ENCODE measurements at regions of chr2 and their contacts with region 1.

Region 1: GRCh38 chr2:86396291-86396785 is 44.8 kb upstream of the KDM3A start:
- DNase-seq: peak in 1 of 2 donors; percentile 64
- H3K4me3 ChIP-seq: peak overlapping the region in 1 of 2 donors; percentile 45
- H3K27ac ChIP-seq: no peak overlapping the region
- H3K4me1 ChIP-seq: no peaks in the 10 kb centered on the region
- H3K27me3 ChIP-seq: no peaks in the 10 kb centered on the region
- CTCF ChIP-seq: peak; percentile 41 to 63 (median 55)

Region 2: DNA sequence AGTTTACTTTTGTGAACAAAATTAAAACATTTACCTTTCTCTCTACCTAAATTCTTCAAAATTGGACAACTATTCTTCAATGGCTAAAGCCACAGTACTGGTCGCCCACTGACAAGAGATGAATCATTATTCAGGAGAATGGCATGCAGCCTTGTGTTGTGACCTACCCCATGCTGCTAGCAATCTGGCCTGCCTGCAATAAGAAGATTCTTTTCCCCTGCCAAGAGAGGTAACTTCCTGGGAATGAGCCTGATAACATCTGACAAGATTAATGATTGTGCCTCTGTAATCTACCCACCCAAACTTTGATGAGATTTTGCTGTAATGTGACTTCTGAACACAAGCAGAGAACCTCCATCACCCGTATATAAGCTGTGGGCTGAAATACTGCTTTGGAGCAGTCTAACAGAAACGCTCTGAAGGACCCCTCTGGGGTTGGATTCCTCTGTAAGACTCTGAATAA is 460.6 kb before region 1 on chr2:
- intact Hi-C with region 1: no loop called
- DNase-seq: no peak
- H3K4me3 ChIP-seq: no peak overlapping the region
- H3K27ac ChIP-seq: no peak overlapping the region
- H3K4me1 ChIP-seq: no peaks in the 10 kb centered on the region
- H3K27me3 ChIP-seq: no peaks in the 10 kb centered on the region
- CTCF ChIP-seq: no peak

Region 3: DNA sequence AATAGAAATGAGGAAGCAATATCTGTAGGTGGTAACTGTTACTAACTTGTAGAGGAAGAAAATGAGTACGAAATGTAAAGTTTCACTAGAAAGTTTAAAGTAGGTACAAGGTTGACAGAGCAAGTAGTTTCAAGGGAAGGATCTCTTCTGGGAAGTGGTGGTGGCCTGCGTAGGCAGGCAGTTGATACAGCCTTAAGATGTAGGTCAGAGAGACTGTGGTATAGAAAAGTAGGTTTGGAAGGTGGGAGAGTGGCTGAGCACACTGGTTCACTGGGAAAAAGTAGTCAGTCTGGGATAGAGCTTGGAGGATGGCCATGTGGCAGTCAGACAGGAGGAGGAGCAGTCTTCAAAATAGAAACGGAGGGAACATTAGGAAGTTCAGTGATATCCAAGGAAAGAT is 68.3 kb after region 1 on chr2:
- intact Hi-C with region 1: no loop called
- DNase-seq: no peak
- H3K4me3 ChIP-seq: no peak overlapping the region
- H3K27ac ChIP-seq: peak overlapping the region; percentile 1 to 19
- H3K4me1 ChIP-seq: peaks cover 3 to 4% of the 10 kb centered on the region in 2 donors
- H3K27me3 ChIP-seq: no peaks in the 10 kb centered on the region
- CTCF ChIP-seq: no peak

Region 4: DNA sequence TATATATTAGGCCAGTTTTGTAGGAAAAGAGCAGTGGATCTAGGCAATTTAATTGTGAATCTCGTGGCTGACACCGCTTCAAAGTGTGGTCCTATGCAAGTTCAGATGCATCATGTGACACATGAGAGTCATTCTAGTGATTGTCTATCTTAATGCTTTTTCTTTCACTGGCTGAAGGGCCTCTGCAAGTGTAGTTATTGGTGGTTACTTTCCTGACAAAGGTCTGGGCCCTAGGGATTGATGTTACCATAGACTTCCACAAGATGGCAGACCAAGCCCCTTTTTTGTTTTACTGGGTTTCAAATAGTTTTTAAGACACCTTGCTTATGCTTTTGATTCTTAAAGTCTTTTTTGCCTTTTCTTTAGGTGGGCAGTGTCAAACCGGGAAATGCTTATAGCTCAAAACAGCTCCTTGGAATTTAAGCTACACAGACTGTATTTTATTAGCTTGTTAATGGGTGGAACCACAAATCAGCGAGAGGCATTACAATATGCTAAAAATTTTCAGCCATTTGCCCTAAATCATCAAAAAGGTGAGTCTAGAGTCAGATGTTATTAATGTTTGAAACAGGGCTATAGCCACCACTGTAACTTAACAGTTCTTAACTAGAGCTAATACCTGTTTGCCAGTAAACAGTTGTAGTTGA is 368.4 kb after region 1 on chr2:
- intact Hi-C with region 1: loop called (anchors 5 kb)
- DNase-seq: no peak
- H3K4me3 ChIP-seq: no peak overlapping the region
- H3K27ac ChIP-seq: no peak overlapping the region
- H3K4me1 ChIP-seq: no peaks in the 10 kb centered on the region
- H3K27me3 ChIP-seq: no peaks in the 10 kb centered on the region
- CTCF ChIP-seq: peak; percentile 25 to 65 (median 60)

Measured in ascending aorta (tissue), 2 donors.